ENCODE measurements at regions of chr1 and their contacts with region 1.

Region 1: GRCh38 chr1:10507111-10507879 is 32.5 kb downstream of the PEX14 start:
- DNase-seq: peak; percentile 41
- ATAC-seq: peak; percentile 91
- H3K4me3 ChIP-seq: no peak overlapping the region
- H3K27ac ChIP-seq: no peak overlapping the region
- H3K4me1 ChIP-seq: peaks cover 17 to 30% of the 10 kb centered on the region in 2 experiments
- H3K27me3 ChIP-seq: no peaks in the 10 kb centered on the region
- CTCF ChIP-seq: peak; percentile 86 to 96 (median 94)
- POLR2A ChIP-seq: no peak
- RAD21 ChIP-seq: peak; percentile 92

Region 2: GRCh38 chr1:10530281-10530740 is 23.0 kb after region 1 on chr1:
- CTCF ChIA-PET with region 1: interaction called, 10 read pairs
- POLR2A ChIA-PET with region 1: no interaction called
- RAD21 ChIA-PET with region 1: no interaction called
- intact Hi-C with region 1: no loop called
- DNase-seq: no peak
- ATAC-seq: peak; percentile 64
- H3K4me3 ChIP-seq: no peak overlapping the region
- H3K27ac ChIP-seq: no peak overlapping the region
- H3K4me1 ChIP-seq: peaks cover 31 to 42% of the 10 kb centered on the region in 2 experiments
- H3K27me3 ChIP-seq: no peaks in the 10 kb centered on the region
- CTCF ChIP-seq: peak; percentile 50 to 70 (median 69)
- POLR2A ChIP-seq: no peak
- RAD21 ChIP-seq: peak; percentile 77

Region 3: DNA sequence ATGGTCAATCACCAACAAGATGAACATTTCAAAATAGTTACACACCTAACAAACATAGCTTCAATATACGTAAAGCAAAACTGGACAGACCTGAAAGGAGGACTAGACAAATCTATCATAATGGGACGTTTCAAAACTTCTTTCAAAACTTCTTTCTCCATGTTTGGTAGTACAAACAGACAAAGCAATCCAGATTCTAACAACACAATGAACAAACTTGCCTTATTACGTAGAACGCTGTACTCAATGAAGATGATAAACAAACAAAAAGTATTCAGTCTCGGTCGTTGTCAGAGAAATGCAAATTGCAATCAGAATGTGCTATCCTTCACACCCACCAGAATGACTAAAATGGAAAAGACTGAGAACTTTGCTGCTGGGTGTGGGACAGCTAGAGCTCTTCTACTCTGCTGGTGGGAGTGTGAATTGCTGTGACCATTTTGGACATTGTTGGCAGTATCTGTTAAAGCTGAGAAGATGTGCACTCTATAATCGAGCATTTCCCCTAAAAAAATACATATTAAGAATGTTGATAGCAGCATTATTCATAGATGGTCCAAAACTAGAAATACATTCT is 78.7 kb after region 1 on chr1:
- CTCF ChIA-PET with region 1: no interaction called
- POLR2A ChIA-PET with region 1: no interaction called
- RAD21 ChIA-PET with region 1: no interaction called
- intact Hi-C with region 1: no loop called
- DNase-seq: no peak
- ATAC-seq: peak; percentile 52; the same call in 1 of the 2 replicates
- H3K4me3 ChIP-seq: no peak overlapping the region
- H3K27ac ChIP-seq: no peak overlapping the region
- H3K4me1 ChIP-seq: no peaks in the 10 kb centered on the region
- H3K27me3 ChIP-seq: no peaks in the 10 kb centered on the region
- CTCF ChIP-seq: peak in 2 of 3 experiments; percentile 18 to 24; a peak in 2 of 6 replicates
- POLR2A ChIP-seq: no peak
- RAD21 ChIP-seq: no peak

Region 4: GRCh38 chr1:10941891-10942541 is 434.7 kb after region 1 on chr1:
- CTCF ChIA-PET with region 1: interaction called, 5 read pairs
- POLR2A ChIA-PET with region 1: no interaction called
- RAD21 ChIA-PET with region 1: interaction called in 1 of 2 experiments, 3 read pairs
- intact Hi-C with region 1: loop called (anchors 1 kb)
- DNase-seq: no peak
- ATAC-seq: peak; percentile 83
- H3K4me3 ChIP-seq: 0 out of 4 replicates have a peak overlapping the region, but pooled peaks of 1 of the 2 experiments have one; percentile 26
- H3K27ac ChIP-seq: no peak overlapping the region
- H3K4me1 ChIP-seq: peaks cover 0 to 8% of the 10 kb centered on the region in 2 experiments; a peak in 2 of 4 replicates
- H3K27me3 ChIP-seq: no peaks in the 10 kb centered on the region; the same call in 1 of the 2 replicates
- CTCF ChIP-seq: peak; percentile 71 to 97 (median 91)
- POLR2A ChIP-seq: no peak
- RAD21 ChIP-seq: peak; percentile 86

Region 5: DNA sequence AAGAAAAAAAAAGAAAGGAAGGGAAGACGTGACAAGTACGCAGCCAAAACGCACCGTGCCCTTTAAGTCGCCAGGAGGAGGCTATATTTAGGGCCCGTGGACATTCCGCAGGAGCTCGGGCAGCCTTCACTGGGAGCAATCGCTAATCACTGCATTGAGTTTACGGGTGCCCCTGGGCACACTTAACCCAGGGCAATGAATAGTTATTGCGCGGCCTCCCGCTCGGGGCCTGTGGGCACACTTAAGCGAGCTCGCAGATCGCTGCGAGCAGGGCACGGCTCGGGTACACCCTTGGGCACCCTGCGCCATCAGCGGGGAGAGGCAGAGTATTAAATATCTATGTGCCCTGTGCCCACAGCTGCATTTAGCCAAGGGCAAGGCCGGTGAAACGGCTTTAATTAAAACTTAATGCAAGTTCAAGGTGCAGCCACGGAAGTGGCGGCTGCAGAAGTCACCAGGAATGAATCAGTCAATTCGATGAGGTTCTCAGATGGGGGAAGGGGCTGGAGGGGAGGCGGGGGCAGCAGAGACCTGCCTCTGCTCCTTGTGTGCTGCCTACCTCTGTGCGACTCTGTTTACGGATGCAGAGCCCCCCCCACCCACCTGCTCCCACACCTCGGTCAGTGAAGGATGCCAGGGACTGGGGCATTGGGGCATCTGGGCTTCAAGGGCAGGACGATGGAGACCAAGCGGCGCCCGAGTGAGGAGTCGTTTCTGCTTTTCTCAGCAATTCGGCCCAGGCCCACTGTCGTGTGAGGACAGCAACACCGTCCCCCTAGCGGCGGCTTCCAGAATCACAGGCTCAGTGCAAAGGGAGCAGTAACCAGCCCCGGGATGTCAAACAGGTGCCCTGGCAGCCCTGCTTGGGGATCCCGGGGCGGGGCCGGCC is 453.4 kb after region 1 on chr1:
- CTCF ChIA-PET with region 1: no interaction called
- POLR2A ChIA-PET with region 1: interaction called, 3 read pairs
- RAD21 ChIA-PET with region 1: no interaction called
- intact Hi-C with region 1: loop called (anchors 5 kb)
- DNase-seq: peak; percentile 71
- ATAC-seq: peak; percentile 100
- H3K4me3 ChIP-seq: no peak overlapping the region
- H3K27ac ChIP-seq: no peak overlapping the region
- H3K4me1 ChIP-seq: peaks cover 2 to 4% of the 10 kb centered on the region in 2 experiments; a peak in 2 of 4 replicates
- H3K27me3 ChIP-seq: no peaks in the 10 kb centered on the region
- CTCF ChIP-seq: peak; percentile 52 to 94 (median 83)
- POLR2A ChIP-seq: no peak
- RAD21 ChIP-seq: peak; percentile 65

Measured in HCT116 (cell line).